ENCODE measurements at regions of chr14 and their contacts with region 1.

Region 1: GRCh38 chr14:24241829-24242443 is 487 bp downstream of the TINF2 start:
- DNase-seq: peak; percentile 95
- ATAC-seq: peak; percentile 94

Region 2: GRCh38 chr14:24188251-24189058 is 53.5 kb before region 1 on chr14 and contains the start of gene IPO4:
- intact Hi-C with region 1: loop called (anchors 2 kb)
- DNase-seq: peak; percentile 95
- ATAC-seq: peak; percentile 96
- total RNA-seq, gene IPO4: 10.5 TPM

Region 3: GRCh38 chr14:24215495-24216344 is 26.2 kb before region 1 on chr14 and contains the start of gene MDP1:
- intact Hi-C with region 1: loop called (anchors 2 kb)
- DNase-seq: peak; percentile 94
- ATAC-seq: peak; percentile 82
- total RNA-seq, gene MDP1: 17.0 TPM

Region 4: GRCh38 chr14:24271134-24271833 is 29.3 kb after region 1 on chr14 and contains the start of gene RABGGTA:
- intact Hi-C with region 1: loop called (anchors 1 kb)
- DNase-seq: peak; percentile 94
- ATAC-seq: peak; percentile 96
- total RNA-seq, gene RABGGTA: 21.5 TPM

Region 5: DNA sequence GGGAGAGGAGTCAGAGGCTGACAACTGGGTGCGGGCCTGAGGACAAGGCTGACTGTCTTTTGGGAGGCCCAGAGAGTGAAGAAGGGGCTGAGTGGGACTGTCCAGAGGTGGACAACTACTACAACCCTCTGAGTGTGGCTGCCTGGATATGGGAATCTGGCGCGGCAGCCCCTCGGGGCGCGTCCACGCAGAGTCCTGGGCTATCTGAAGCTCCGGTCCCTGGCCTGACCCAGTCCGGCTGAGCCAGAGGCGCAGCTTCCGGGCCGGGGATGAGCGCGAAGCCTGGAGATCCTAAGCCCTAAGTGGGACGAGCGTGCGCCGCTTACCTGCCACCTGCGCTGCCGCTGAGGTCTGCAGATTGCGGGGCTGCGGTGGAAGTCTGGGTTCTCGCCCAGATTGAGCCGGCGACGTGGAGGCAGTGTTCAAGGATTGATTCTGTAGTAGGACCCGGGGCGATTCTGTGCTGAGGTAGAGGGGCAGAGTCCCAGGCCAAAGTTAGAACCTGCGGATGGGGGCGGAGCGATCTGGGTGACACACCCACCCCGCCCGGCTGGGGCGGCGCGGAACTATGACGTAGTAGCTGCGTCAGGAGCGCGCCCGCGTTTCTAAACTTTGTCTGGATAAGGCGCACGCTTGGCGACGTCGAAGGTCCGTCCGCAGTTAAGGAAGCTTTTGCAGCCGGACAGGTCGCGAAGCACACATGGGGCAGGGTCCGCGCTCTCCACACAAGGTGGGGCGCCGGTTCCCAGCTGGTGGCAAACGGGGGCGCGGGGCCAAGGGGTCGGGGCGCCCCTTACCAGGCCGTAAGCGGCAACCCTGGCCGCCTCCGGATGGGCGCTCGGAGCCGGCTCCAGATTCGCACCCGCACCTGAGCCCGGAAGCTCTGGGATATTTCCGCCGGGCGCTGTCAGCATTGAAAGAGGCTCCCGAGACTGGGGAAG is 57.6 kb after region 1 on chr14 and contains the starts of genes DHRS1 and NOP9:
- intact Hi-C with region 1: loop called (anchors 1 kb)
- DNase-seq: peak; percentile 96
- ATAC-seq: peak; percentile 88
- total RNA-seq, gene DHRS1: 8.3 TPM
- total RNA-seq, gene NOP9: 23.0 TPM

Region 6: DNA sequence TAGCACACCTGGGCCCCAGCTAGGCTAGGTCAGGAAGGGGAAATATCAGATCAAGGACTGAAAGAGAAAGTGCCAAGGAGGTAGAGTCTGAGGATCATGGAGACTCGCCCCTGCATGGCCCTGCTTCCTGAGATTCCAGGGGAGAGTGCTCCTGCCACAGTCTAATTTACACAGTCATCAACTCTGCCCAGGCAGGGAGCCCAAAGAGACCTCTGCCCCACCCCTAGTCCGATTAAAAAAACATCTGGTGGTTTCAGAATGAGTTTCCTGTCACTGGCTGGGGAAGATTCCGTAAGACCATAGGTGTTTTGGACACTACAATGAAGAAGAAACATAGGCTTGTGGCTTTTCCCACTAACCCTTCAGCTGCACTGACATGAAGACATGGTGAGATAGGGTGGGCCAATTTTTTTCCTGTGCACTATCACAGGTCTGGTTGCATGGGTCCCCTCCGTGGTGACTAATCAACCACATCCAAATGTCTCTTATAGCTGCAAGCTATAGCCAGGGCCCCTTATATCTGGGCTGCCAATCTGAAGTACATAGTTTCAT is 423.6 kb after region 1 on chr14:
- intact Hi-C with region 1: no loop called
- DNase-seq: no peak
- ATAC-seq: no peak

Measured in Right ventricle myocardium inferior (tissue), 1 donor.